ENCODE measurements at regions of chr11 and their contacts with region 1.

Region 1: DNA sequence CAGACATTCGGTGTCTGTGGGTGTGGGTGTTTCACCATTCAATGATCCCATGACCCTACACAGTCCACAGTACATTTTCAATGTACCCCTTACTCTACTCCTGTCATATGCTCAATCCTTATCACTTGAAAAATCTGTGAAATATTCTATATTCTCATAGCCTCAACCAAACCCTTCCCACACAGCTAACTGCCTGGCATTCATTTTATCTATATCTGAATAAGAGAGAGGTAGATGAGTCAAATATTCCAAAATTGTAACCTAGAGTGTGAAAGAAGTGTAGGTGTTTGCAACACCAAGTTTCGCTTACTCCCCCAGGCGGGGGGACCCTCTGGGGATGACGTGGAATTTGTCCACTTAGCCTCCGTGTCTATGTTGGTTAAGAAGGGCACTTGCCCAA is 354.8 kb downstream of the ETS1 start:
- DNase-seq: no peak
- H3K4me3 Mint-ChIP-seq: no peak overlapping the region
- H3K27ac Mint-ChIP-seq: peak overlapping the region; percentile 81
- H3K4me1 Mint-ChIP-seq: peaks cover 58% of the 10 kb centered on the region
- H3K27me3 Mint-ChIP-seq: no peaks in the 10 kb centered on the region

Region 2: DNA sequence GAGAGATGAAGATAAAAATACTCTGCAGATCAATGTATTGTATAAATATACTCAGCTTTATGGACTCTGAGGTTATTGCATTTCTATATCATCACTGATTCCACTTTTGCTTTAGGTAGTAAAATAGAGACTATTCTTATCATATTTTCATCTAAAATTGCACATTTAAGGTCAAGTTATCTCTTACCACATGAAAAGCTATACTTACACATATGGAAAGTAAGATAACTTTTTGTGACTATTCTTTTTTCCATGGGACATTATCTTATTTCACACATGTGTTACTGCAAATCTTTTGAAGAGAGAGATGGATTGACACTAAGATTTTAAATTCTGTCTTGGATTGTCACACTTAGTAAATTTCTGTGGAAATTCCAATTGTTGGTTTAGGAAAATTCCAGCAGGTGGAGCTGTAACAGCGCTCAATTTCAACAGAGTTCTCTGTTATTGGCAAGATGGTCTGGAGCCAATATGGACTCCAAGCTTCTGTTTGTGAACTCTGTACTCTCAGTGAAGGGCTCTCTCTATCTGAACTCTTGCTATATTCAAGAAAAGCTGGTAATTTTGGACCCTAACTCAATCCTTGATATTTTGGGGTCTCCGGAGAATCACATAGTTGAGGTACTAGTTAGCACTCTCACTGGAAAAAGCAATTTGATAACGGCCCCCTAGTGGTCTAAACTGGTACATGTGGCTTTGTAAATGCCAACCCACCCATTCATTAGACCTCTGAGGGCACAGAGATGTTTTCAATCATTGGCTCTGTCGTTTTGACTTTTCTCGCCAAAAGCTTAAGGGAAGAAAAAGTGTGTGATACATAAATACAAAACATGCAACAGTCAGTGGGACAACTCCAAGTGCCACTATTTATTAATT is 74.9 kb before region 1 on chr11:
- intact Hi-C with region 1: loop called (anchors 1 kb)
- DNase-seq: peak; percentile 39
- H3K4me3 Mint-ChIP-seq: no peak overlapping the region
- H3K27ac Mint-ChIP-seq: peak overlapping the region; percentile 81
- H3K4me1 Mint-ChIP-seq: peaks cover 26% of the 10 kb centered on the region
- H3K27me3 Mint-ChIP-seq: no peaks in the 10 kb centered on the region

Region 3: DNA sequence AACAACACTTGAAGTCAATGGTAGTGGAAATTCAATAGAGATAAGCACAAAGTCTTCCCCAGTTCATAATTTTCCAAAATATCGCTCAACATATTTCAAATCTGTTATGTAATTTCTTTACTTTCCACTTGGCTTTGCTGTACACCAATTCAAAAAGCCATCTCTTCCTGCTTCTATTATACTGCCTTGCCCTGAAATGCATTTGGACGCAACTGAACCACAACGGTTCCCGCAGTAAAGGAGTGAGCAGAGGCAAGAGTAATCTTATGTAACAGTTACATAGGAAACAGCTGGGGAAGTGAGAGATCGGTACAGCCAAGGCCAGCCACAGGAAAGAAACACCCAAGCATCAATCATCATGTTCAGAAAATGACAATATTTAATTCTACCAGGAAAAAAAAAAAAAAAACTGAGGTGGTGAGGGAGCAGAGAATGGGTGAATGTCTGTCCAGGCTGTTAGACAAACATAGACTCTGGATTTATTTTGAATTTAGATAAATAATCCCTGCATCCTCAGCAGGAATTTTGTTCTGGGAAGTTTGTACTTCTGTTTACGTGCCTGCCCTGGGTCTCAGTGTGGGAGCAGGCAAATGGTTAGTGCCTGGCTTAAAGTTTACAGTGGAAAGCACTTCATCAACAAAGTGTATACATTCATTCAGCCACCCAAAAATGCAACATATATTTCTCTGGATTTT is 37.4 kb before region 1 on chr11:
- intact Hi-C with region 1: loop called (anchors 1 kb)
- DNase-seq: peak; percentile 26
- H3K4me3 Mint-ChIP-seq: no peak overlapping the region
- H3K27ac Mint-ChIP-seq: peak overlapping the region; percentile 29
- H3K4me1 Mint-ChIP-seq: peaks cover 42% of the 10 kb centered on the region
- H3K27me3 Mint-ChIP-seq: peaks cover 1% of the 10 kb centered on the region

Region 4: DNA sequence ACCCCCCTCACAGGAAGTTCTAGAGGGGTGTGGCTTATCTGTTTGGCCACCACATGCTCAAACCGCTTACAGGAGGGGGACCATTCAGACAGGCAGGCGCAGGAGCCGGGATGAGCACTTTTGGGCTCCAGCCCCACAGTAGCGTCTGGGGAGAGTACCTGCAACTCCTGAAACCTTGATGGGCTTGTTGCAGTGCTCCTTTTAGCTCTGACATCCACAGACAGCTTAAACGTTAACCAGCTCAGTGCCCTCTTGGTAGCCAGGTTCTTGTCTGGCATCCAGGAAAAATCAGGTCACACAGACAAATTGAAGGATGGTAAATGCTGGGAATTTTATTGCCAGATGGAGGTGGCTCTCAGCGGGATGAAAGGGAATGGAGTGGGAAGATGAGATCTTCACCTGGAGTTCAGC is 28.4 kb after region 1 on chr11:
- intact Hi-C with region 1: no loop called
- DNase-seq: no peak
- H3K4me3 Mint-ChIP-seq: no peak overlapping the region
- H3K27ac Mint-ChIP-seq: no peak overlapping the region
- H3K4me1 Mint-ChIP-seq: peaks cover 2% of the 10 kb centered on the region
- H3K27me3 Mint-ChIP-seq: peaks cover 11% of the 10 kb centered on the region

Region 5: GRCh38 chr11:128299132-128299726 is 66.6 kb after region 1 on chr11:
- intact Hi-C with region 1: no loop called
- DNase-seq: no peak
- H3K4me3 Mint-ChIP-seq: peak overlapping the region; percentile 45
- H3K27ac Mint-ChIP-seq: peak overlapping the region; percentile 89
- H3K4me1 Mint-ChIP-seq: peaks cover 79% of the 10 kb centered on the region
- H3K27me3 Mint-ChIP-seq: no peaks in the 10 kb centered on the region

Region 6: DNA sequence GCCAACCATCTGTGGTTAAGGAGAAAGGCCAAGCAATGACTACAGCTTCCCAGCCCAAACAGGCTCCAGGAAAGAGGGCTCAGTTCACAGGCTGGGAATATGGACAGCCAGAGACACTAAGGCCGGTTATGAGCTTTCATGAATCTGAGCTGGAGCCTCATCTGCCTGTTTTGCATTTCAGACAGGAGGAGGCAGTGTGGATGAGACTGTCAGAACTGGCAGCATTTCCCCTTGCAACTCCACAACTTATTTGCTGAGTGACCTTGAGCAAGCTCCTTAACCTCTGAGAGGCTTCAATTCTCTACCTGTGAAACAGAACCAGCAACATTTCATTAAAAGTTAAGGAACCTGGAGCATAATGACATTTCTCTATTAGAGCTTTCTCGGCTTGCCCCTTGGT is 90.8 kb after region 1 on chr11:
- intact Hi-C with region 1: loop called (anchors 1 kb)
- DNase-seq: peak; percentile 44
- H3K4me3 Mint-ChIP-seq: peak overlapping the region; percentile 62
- H3K27ac Mint-ChIP-seq: peak overlapping the region; percentile 94
- H3K4me1 Mint-ChIP-seq: peaks cover 81% of the 10 kb centered on the region
- H3K27me3 Mint-ChIP-seq: no peaks in the 10 kb centered on the region

Region 7: GRCh38 chr11:128630367-128631230 is 398.0 kb after region 1 on chr11:
- intact Hi-C with region 1: loop called (anchors 2 kb)
- DNase-seq: peak; percentile 81
- H3K4me3 Mint-ChIP-seq: peak overlapping the region; percentile 28
- H3K27ac Mint-ChIP-seq: peak overlapping the region; percentile 97
- H3K4me1 Mint-ChIP-seq: peaks cover 59% of the 10 kb centered on the region
- H3K27me3 Mint-ChIP-seq: no peaks in the 10 kb centered on the region

Region 8: GRCh38 chr11:128776424-128777284 is 544.1 kb after region 1 on chr11:
- intact Hi-C with region 1: no loop called
- DNase-seq: peak; percentile 16
- H3K4me3 Mint-ChIP-seq: no peak overlapping the region
- H3K27ac Mint-ChIP-seq: peak overlapping the region; percentile 38
- H3K4me1 Mint-ChIP-seq: peaks cover 12% of the 10 kb centered on the region
- H3K27me3 Mint-ChIP-seq: no peaks in the 10 kb centered on the region